Ascending aorta (tissue), 2 donors: ENCODE measurements at regions of chr9 and their contacts with region 1.

Region 1: GRCh38 chr9:88814577-88814976 is 176.7 kb upstream of the S1PR3 start:
- DNase-seq: peak; percentile 44 to 93
- H3K4me3 ChIP-seq: no peak overlapping the region
- H3K27ac ChIP-seq: peak overlapping the region; percentile 58 to 70
- H3K4me1 ChIP-seq: peaks cover 10 to 15% of the 10 kb centered on the region in 2 donors
- H3K27me3 ChIP-seq: no peaks in the 10 kb centered on the region
- CTCF ChIP-seq: no peak

Region 2: DNA sequence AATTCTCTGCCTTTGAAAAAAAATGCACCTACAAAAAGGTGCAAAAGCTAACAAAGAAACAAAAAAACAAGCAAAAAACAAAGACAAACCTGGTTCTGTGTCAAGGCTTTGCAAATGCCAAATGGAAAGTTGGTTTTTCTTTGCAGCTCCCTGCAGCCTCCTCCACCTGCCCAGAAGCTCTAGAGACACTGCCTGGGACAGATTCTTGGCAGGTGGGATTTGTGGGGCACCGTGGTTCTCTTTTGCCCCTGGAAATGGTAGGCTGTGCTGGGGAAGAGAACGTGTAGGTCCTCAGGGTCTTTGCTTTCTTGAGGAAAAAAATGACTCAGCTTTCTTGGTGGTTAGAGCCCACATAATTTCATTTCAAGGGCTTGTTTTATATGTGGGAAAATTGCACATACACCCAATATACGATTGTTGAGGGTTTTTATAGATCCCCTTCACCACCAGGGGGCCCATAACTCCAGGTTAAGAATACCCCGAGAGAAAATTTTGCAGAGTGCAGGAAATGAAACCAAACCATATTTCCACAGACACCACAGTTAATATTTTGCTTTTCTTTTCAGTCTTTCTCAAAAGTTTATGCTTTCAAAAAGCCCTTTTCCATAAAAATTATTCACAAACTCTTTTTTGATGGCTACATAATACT is 220.9 kb before region 1 on chr9:
- intact Hi-C with region 1: no loop called
- DNase-seq: peak in 1 of 2 donors; percentile 80
- H3K4me3 ChIP-seq: no peak overlapping the region
- H3K27ac ChIP-seq: no peak overlapping the region
- H3K4me1 ChIP-seq: no peaks in the 10 kb centered on the region
- H3K27me3 ChIP-seq: no peaks in the 10 kb centered on the region
- CTCF ChIP-seq: peak; percentile 54 to 75 (median 68)

Region 3: GRCh38 chr9:88791105-88791805 is 23.3 kb before region 1 on chr9:
- intact Hi-C with region 1: loop called (anchors 2 kb)
- DNase-seq: peak in 1 of 2 donors; percentile 72
- H3K4me3 ChIP-seq: no peak overlapping the region
- H3K27ac ChIP-seq: peak overlapping the region; percentile 46 to 65
- H3K4me1 ChIP-seq: peaks cover 2 to 21% of the 10 kb centered on the region in 2 donors
- H3K27me3 ChIP-seq: no peaks in the 10 kb centered on the region
- CTCF ChIP-seq: no peak

Region 4: GRCh38 chr9:88991066-88992034 is 176.8 kb after region 1 on chr9 and contains the start of gene S1PR3:
- intact Hi-C with region 1: loop called (anchors 10 kb)
- DNase-seq: peak in 1 of 2 donors; percentile 86
- H3K4me3 ChIP-seq: peak within 1 kb of the TSS; percentile 77 to 89
- H3K27ac ChIP-seq: peak within 1 kb of the TSS; percentile 80 to 90
- H3K4me1 ChIP-seq: peaks cover 5 to 10% of the 10 kb centered on the region in 2 donors
- H3K27me3 ChIP-seq: no peaks in the 10 kb centered on the region
- CTCF ChIP-seq: peak in 1 of 3 experiments; percentile 5
- total RNA-seq, gene S1PR3: 59.3 TPM